ENCODE measurements at regions of chr4 and their contacts with region 1.

Region 1: GRCh38 chr4:154686838-154687237 is 57.0 kb upstream of the LRAT start:
- DNase-seq: peak; percentile 8
- H3K27ac ChIP-seq: no peak overlapping the region
- CTCF ChIP-seq: 0 out of 2 replicates have a peak, but pooled peaks have one; percentile 15

Region 2: GRCh38 chr4:154779362-154779947 is 92.6 kb after region 1 on chr4:
- CTCF ChIA-PET with region 1: interaction called, 14 read pairs
- POLR2A ChIA-PET with region 1: no interaction called
- DNase-seq: peak; percentile 58
- H3K27ac ChIP-seq: no peak overlapping the region
- CTCF ChIP-seq: peak; percentile 68

Region 3: DNA sequence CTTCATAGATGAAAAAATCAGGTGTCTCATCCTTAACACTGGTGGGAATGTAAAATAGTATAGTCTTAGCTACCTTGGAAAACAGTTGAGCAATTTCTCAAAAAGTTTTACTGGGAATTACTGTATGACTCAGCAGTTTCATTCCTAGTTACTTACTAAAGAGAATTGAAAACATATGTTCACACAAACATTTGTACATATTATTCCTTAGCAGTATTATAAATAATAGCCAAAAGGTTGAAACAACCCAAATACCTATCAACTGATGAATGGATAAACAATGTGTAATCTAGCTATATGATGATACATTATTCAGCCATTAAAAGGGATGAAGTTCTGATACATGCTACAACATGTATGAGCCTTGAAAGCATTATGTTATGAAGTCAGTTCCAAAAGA is 135.9 kb after region 1 on chr4:
- CTCF ChIA-PET with region 1: no interaction called
- POLR2A ChIA-PET with region 1: no interaction called
- DNase-seq: peak; percentile 12
- H3K27ac ChIP-seq: no peak overlapping the region
- CTCF ChIP-seq: no peak

Measured in RWPE1 (cell line).